Activated CD8-positive, alpha-beta T cell treated with anti-CD3 and anti-CD28 coated beads for 36 hours (primary cell): ENCODE measurements at regions of chr21 and their contacts with region 1.

Region 1: DNA sequence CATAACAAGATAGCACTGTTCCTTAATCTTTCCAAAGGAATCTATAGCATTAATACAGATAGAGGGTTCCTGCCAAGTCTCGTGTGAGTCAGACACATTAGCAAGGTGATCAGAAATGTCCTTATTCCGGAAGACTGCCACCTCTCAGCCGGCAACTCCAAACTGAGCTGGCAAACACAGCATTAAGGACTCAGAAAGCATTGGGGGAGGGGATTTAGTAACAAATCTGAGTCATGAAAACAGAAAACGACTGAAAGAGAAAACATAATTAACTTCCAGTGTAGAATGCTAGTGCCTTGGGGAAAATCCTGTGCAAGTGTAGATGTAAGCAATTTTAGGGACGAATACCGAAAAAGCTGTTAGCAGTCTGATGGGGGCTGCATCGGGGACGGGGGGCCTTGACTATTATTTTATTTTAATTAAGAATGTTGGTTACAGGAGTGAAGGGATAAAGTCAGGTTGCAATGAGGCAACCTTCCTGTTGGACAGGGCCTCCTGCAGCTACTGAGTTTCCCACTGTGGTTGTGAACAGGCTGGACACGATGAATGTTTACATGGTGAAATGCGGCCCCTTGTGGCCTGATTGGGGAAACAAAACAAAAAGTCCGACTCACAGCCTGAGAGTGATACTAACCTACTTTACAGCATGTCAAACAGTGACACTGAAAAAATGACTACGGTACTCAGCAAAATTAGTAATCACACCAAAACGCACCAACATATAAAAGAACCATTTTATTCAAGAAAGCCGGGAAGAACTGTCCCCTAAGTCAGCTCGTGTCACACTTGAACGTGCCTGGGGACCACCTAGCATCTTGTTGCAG is 20.7 kb downstream of the MIS18A start:
- DNase-seq: peak; percentile 64
- ATAC-seq: peak; percentile 58
- H3K4me3 Mint-ChIP-seq: no peak overlapping the region
- H3K27ac Mint-ChIP-seq: no peak overlapping the region
- H3K4me1 Mint-ChIP-seq: no peaks in the 10 kb centered on the region
- H3K27me3 Mint-ChIP-seq: peaks cover 2% of the 10 kb centered on the region
- CTCF ChIP-seq: peak; percentile 65

Region 2: DNA sequence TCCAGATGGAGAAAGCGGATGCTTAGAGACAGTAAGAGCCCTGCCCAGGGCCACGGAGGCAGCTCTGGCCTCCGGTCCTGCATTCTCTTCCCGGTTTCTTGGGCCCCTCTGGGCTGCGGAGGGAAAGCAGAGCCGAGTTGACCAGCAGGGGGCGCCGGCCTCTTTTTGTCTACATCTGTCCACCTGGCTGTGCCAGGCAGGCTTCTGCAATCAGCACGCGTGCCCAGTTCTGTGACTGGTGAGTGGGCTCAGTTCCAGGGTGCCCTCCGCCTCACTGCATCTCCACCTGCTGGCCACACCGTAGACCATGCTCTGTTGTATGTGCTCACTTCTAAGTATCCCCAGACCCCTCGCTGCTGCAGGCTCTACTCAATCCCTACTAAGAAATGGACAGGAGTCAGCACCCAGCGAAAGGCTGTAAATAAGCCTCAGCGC is 392.1 kb before region 1 on chr21:
- CTCF ChIA-PET with region 1: interaction called, 17 read pairs
- POLR2A ChIA-PET with region 1: no interaction called
- intact Hi-C with region 1: loop called (anchors 5 kb)
- DNase-seq: peak; percentile 87
- ATAC-seq: peak; percentile 89
- H3K4me3 Mint-ChIP-seq: no peak overlapping the region
- H3K27ac Mint-ChIP-seq: no peak overlapping the region
- H3K4me1 Mint-ChIP-seq: no peaks in the 10 kb centered on the region
- H3K27me3 Mint-ChIP-seq: peaks cover 16% of the 10 kb centered on the region
- CTCF ChIP-seq: peak; percentile 91

Region 3: GRCh38 chr21:32096411-32096810 is 161.8 kb before region 1 on chr21:
- CTCF ChIA-PET with region 1: interaction called, 12 read pairs
- POLR2A ChIA-PET with region 1: no interaction called
- intact Hi-C with region 1: no loop called
- DNase-seq: peak; percentile 14
- ATAC-seq: no peak
- H3K4me3 Mint-ChIP-seq: no peak overlapping the region
- H3K27ac Mint-ChIP-seq: no peak overlapping the region
- H3K4me1 Mint-ChIP-seq: no peaks in the 10 kb centered on the region
- H3K27me3 Mint-ChIP-seq: no peaks in the 10 kb centered on the region
- CTCF ChIP-seq: no peak

Region 4: GRCh38 chr21:32463889-32464300 is 205.7 kb after region 1 on chr21:
- CTCF ChIA-PET with region 1: no interaction called
- POLR2A ChIA-PET with region 1: no interaction called
- intact Hi-C with region 1: no loop called
- DNase-seq: peak; percentile 3
- ATAC-seq: no peak
- H3K4me3 Mint-ChIP-seq: no peak overlapping the region
- H3K27ac Mint-ChIP-seq: no peak overlapping the region
- H3K4me1 Mint-ChIP-seq: peaks cover 5% of the 10 kb centered on the region
- H3K27me3 Mint-ChIP-seq: no peaks in the 10 kb centered on the region
- CTCF ChIP-seq: no peak